ENCODE measurements at regions of chr12 and their contacts with region 1.

Region 1: DNA sequence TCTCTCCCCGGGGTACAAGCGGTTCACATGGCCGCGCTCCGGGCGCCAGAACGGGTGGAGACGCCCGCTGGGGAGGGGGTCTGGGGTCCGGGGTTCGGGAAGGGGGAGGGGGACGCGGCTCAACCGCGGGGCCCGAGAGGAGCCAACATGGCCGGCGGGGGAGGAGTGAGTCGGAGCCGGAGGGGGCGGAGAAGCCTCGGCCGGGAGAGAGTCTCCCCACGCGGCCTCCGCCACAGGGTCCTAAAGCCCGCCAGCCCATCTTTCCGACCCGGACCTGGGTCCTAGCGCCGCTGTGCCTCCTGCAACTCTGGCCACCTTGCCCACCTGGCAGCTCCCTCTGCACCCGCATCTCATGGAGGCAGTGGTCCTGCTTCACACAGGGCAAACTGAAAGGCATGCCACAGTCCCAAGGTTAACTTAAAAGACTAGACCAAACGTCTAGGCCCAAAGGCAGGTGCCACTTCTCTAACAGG is at the start of gene BAZ2A:
- DNase-seq: peak; percentile 61 to 75
- H3K4me3 ChIP-seq: peak within 1 kb of the TSS; percentile 96
- H3K27ac ChIP-seq: peak within 1 kb of the TSS; percentile 35
- H3K4me1 ChIP-seq: peaks cover 43% of the 10 kb centered on the region
- H3K27me3 ChIP-seq: no peaks in the 10 kb centered on the region
- CTCF ChIP-seq: no peak
- total RNA-seq, gene BAZ2A: 99.5 and 115 TPM in 2 replicates

Region 2: GRCh38 chr12:56286044-56286830 is 344.0 kb before region 1 on chr12:
- CTCF ChIA-PET with region 1: no interaction called
- POLR2A ChIA-PET with region 1: interaction called, 14 read pairs
- intact Hi-C with region 1: no loop called
- DNase-seq: no peak
- H3K4me3 ChIP-seq: no peak overlapping the region
- H3K27ac ChIP-seq: no peak overlapping the region
- H3K4me1 ChIP-seq: peaks cover 12% of the 10 kb centered on the region
- H3K27me3 ChIP-seq: no peaks in the 10 kb centered on the region
- CTCF ChIP-seq: no peak

Region 3: DNA sequence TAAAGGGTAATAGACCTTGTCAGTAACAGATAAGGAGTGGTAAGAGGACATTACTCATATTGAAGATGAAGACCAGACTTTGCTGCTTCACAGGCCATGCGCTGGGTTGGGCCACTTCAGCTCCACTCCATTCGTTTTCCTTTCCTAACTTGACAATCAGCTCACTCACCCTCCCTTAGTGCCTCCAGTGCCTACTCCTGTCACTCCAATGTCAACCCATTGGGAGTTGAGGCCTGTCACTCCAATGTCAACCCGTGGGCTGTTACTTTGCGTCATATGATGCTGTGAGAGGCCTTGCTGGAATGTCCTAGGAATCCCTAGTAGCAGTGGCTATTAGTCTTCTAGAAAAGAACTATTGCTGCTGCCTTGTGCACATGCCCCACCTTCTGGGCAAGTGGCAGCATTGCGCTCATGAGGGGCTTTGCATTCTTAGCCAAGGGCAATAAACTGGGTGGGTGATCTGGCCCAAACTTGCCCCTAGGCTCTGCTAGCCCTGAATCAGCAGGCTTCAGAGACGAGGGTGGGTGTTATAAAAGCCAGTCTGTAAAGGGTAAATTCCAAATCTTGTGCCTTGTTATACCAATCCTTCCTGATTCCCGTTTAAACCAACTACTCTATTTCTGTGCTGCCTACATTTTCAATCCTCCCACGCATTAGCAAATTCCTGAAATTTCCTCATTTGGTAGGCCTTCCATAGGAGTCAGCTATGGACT is 36.1 kb before region 1 on chr12:
- CTCF ChIA-PET with region 1: interaction called, 10 read pairs
- POLR2A ChIA-PET with region 1: no interaction called
- intact Hi-C with region 1: no loop called
- DNase-seq: peak in 1 of 2 experiments; percentile 56
- H3K4me3 ChIP-seq: no peak overlapping the region
- H3K27ac ChIP-seq: peak overlapping the region; percentile 35; the same call in 1 of the 2 replicates
- H3K4me1 ChIP-seq: no peaks in the 10 kb centered on the region
- H3K27me3 ChIP-seq: no peaks in the 10 kb centered on the region
- CTCF ChIP-seq: peak; percentile 89

Region 4: GRCh38 chr12:56677680-56678079 is 47.5 kb after region 1 on chr12:
- CTCF ChIA-PET with region 1: no interaction called
- POLR2A ChIA-PET with region 1: no interaction called
- intact Hi-C with region 1: no loop called
- DNase-seq: no peak
- H3K4me3 ChIP-seq: no peak overlapping the region
- H3K27ac ChIP-seq: peak overlapping the region; percentile 43
- H3K4me1 ChIP-seq: 0 out of 2 replicates have a peak, but pooled peaks cover 10% of the 10 kb centered on the region
- H3K27me3 ChIP-seq: no peaks in the 10 kb centered on the region
- CTCF ChIP-seq: no peak